Posterior vena cava (tissue), 2 donors: ENCODE measurements at regions of chr9 and their contacts with region 1.

Region 1: GRCh38 chr9:129489838-129490582 is 130.9 kb downstream of the C9orf50 start:
- DNase-seq: no peak

Region 2: DNA sequence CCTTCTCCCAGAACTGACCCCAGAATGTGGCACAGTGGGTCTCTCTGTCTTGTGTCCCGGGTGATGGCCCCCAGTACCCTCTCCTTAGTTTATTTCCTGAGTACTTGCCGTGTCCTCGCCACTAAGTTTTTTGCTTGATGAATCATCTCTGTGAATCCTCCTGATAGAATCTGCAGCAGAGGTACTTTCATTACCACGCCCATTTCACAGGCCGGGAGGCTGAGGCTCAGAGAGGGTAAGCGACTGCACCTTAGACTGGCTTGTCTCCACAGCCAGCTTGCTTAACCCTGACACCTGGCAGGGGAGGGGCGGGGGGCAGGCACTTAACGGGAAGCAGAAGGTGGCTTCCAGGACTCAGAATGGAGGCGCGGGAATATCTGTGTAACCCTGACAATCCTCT is 304.0 kb before region 1 on chr9:
- intact Hi-C with region 1: no loop called
- DNase-seq: no peak

Region 3: GRCh38 chr9:129328377-129329028 is 161.5 kb before region 1 on chr9:
- intact Hi-C with region 1: loop called in 1 of 2 experiments (anchors 5 kb)
- DNase-seq: no peak

Region 4: DNA sequence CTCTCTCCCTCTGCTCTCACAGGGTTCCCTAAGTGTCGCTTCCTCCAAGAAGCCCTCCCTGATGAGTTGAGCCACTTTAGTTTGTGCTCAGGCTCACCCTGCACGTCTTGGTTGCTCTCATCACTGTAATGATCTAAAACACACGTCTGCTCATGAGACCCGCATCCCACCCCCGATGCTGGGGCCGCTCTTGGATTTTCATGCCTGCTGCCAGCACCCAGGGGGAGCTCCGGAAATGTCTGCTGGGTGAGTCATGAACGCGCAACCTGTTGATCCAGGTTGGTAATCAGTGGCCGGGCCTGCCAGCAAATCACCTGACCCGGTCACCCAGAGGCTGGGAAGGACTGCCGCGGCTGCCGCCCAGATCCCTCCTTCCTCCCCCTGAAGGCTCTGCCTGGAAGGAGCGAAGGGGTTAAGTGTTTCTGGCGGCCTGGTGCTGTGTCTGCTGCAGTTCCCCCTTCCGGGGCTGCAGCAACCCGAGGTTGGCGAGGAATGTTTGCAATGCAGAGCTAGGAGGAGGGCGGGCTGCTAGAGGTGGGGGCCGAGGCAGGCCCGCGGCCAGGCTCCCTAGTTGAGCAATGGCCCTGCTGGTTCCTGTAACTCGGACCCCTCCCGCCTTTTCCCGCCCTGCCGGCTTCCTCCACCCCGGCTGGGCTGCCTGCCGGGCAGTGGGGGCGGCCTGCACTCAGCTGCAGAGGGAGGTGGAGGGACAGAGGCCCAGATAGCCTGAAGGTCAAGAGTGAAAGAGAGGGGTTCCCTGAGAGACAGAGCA is 155.9 kb before region 1 on chr9:
- intact Hi-C with region 1: loop called (anchors 5 kb)
- DNase-seq: peak; percentile 98